ENCODE measurements at regions of chr5 and their contacts with region 1.

Region 1: DNA sequence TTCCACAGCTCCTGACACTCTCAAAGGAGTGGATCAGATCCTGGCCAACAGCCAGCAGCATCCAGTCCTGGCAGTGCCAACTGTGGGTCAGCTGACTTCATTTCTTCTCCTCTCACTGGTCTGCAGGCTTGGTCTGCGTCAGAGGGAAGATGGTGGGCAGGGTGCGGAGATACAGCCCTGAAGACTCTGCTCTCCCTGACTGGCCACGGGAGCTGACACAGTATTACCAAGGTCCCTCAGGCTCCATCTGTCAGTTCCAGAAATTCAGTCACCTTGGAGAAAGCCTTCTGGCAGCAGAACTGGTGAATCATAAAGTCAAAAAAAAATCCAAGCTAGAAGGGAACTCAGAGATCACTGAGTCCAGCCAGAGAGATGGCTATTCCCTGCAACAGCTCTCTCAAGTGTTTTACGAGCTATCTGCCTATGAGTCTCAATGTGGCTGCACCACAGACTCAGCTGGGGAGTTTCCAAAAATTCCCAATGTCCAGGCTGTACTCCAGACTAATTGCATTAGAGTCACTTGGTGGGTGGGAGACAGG is 28.0 kb downstream of the C1QTNF2 start:
- DNase-seq: no peak
- ATAC-seq: no peak
- H3K4me3 Mint-ChIP-seq: no peak overlapping the region
- H3K27ac Mint-ChIP-seq: no peak overlapping the region
- H3K4me1 Mint-ChIP-seq: peaks cover 28% of the 10 kb centered on the region
- H3K27me3 Mint-ChIP-seq: no peaks in the 10 kb centered on the region
- CTCF ChIP-seq: no peak

Region 2: GRCh38 chr5:160021831-160022446 is 320.5 kb before region 1 on chr5:
- CTCF ChIA-PET with region 1: interaction called, 36 read pairs
- POLR2A ChIA-PET with region 1: no interaction called
- DNase-seq: peak; percentile 31
- ATAC-seq: peak; percentile 92
- H3K4me3 Mint-ChIP-seq: no peak overlapping the region
- H3K27ac Mint-ChIP-seq: no peak overlapping the region
- H3K4me1 Mint-ChIP-seq: peaks cover 6% of the 10 kb centered on the region
- H3K27me3 Mint-ChIP-seq: no peaks in the 10 kb centered on the region
- CTCF ChIP-seq: peak; percentile 74

Region 3: GRCh38 chr5:160105686-160106360 is 236.6 kb before region 1 on chr5:
- CTCF ChIA-PET with region 1: no interaction called
- POLR2A ChIA-PET with region 1: no interaction called
- DNase-seq: no peak
- ATAC-seq: no peak
- H3K4me3 Mint-ChIP-seq: no peak overlapping the region
- H3K27ac Mint-ChIP-seq: peak overlapping the region; percentile 71
- H3K4me1 Mint-ChIP-seq: peaks cover 16% of the 10 kb centered on the region
- H3K27me3 Mint-ChIP-seq: no peaks in the 10 kb centered on the region
- CTCF ChIP-seq: no peak

Region 4: GRCh38 chr5:160159991-160160792 is 182.3 kb before region 1 on chr5:
- CTCF ChIA-PET with region 1: interaction called, 10 read pairs
- POLR2A ChIA-PET with region 1: no interaction called
- DNase-seq: peak; percentile 80
- ATAC-seq: peak; percentile 85
- H3K4me3 Mint-ChIP-seq: peak overlapping the region; percentile 12
- H3K27ac Mint-ChIP-seq: peak overlapping the region; percentile 100
- H3K4me1 Mint-ChIP-seq: peaks cover 52% of the 10 kb centered on the region
- H3K27me3 Mint-ChIP-seq: no peaks in the 10 kb centered on the region
- CTCF ChIP-seq: no peak

Region 5: DNA sequence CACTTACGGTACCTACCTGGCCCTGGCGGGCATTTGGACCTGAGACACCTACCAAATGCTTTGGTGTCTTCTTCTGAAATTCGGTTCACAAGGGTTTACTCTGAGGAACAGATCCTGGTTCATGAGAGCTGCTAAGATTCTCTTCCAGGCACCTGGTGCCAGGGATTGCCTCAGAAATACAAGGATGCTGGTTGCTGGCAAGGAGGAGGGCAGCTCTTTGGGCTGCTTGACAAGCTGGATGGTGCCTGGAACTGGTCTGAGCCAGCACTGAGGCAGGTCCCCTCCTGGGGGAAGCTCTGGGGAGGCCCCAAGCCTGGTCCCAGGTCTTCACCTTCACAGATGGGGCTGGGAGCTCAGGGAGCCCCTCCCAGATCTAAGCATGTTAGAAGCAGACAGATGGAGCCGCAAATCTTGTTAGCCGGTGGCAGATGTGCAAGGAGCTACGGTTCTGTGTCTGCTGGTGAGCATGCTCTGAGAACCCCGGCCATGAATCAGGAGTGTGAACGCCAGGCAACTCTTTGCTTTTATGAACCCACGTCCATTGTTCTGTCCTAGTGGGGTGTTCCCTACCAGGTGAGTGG is 96.9 kb before region 1 on chr5:
- CTCF ChIA-PET with region 1: interaction called, 101 read pairs
- POLR2A ChIA-PET with region 1: interaction called, 12 read pairs
- DNase-seq: no peak
- ATAC-seq: 0 out of 2 replicates have a peak, but pooled peaks have one; percentile 8
- H3K4me3 Mint-ChIP-seq: no peak overlapping the region
- H3K27ac Mint-ChIP-seq: no peak overlapping the region
- H3K4me1 Mint-ChIP-seq: peaks cover 11% of the 10 kb centered on the region
- H3K27me3 Mint-ChIP-seq: no peaks in the 10 kb centered on the region
- CTCF ChIP-seq: no peak

Region 6: DNA sequence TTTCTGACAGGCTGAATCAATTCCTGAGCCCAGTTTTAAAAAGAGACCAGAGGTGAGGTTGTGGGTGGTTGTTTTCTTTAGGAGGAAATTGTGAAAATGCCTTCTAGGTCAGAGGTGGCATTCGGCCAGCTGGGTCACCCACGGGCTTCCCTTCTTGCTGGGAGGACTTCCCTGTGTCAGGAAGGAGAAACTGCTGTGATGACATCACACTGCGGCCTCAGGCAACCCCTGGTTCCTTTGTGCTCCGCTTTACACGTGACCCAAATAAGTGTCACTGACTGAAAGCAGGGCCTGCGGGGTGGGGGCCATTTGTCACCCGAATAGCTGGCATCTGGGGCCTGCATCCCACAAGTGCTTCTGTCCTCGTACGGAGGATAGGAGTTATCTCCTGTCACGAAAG is 73.5 kb before region 1 on chr5:
- CTCF ChIA-PET with region 1: interaction called, 40 read pairs
- POLR2A ChIA-PET with region 1: interaction called, 3 read pairs
- DNase-seq: no peak
- ATAC-seq: no peak
- H3K4me3 Mint-ChIP-seq: no peak overlapping the region
- H3K27ac Mint-ChIP-seq: 0 out of 2 replicates have a peak overlapping the region, but pooled peaks have one; percentile 38
- H3K4me1 Mint-ChIP-seq: peaks cover 61% of the 10 kb centered on the region
- H3K27me3 Mint-ChIP-seq: no peaks in the 10 kb centered on the region; the same call in 1 of the 2 replicates
- CTCF ChIP-seq: no peak

Region 7: GRCh38 chr5:160306696-160307095 is 35.8 kb before region 1 on chr5:
- CTCF ChIA-PET with region 1: interaction called, 13 read pairs
- POLR2A ChIA-PET with region 1: interaction called, 9 read pairs
- DNase-seq: no peak
- ATAC-seq: no peak
- H3K4me3 Mint-ChIP-seq: no peak overlapping the region
- H3K27ac Mint-ChIP-seq: no peak overlapping the region; the same call in 1 of the 2 replicates
- H3K4me1 Mint-ChIP-seq: peaks cover 27% of the 10 kb centered on the region
- H3K27me3 Mint-ChIP-seq: no peaks in the 10 kb centered on the region
- CTCF ChIP-seq: no peak

Region 8: GRCh38 chr5:160369990-160370712 is 27.7 kb after region 1 on chr5 and contains the start of gene C1QTNF2:
- CTCF ChIA-PET with region 1: interaction called, 11 read pairs
- POLR2A ChIA-PET with region 1: no interaction called
- DNase-seq: peak; percentile 64
- ATAC-seq: peak; percentile 86
- H3K4me3 Mint-ChIP-seq: peak within 1 kb of the TSS; percentile 68
- H3K27ac Mint-ChIP-seq: no peak within 1 kb of the TSS
- H3K4me1 Mint-ChIP-seq: peaks cover 11% of the 10 kb centered on the region
- H3K27me3 Mint-ChIP-seq: peaks cover 54% of the 10 kb centered on the region
- CTCF ChIP-seq: no peak
- total RNA-seq, gene C1QTNF2: 0.25 to 0.52 TPM (median 0.44 TPM) in 3 replicates

Measured in WTC11 (cell line).